ENCODE measurements at regions of chr9 and their contacts with region 1.

Region 1: DNA sequence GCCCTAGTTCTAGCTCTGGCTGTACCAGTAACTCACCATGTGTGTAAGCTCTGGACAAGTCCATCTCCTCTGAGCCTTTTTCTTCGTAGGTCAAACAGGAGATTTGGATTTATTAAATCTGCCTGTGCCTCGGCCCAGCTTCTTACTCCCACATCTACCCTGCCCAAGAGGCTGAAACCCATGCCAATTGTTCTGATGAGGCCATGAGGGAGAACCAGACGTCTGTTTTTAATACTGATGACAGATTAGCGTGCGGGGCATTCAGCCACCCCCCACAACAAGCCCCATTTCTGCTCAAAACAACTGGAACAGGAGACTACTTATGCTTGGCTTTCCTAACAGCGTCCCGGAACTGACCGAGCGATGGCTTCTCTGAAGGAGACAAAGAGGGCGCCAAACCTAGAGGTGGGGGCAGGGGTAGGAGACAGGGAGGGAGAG is 81.2 kb upstream of the TRIM32 start:
- DNase-seq: peak; percentile 30 to 34
- ATAC-seq: peak; percentile 70 to 93 (median 86)
- H3K4me3 ChIP-seq: no peak overlapping the region
- H3K27ac ChIP-seq: peak overlapping the region in 8 of 10 donors; percentile 10 to 72 (median 54)
- H3K4me1 ChIP-seq: peaks cover 0 to 7% (median 0%) of the 10 kb centered on the region in 9 donors
- H3K27me3 ChIP-seq: no peaks in the 10 kb centered on the region
- CTCF ChIP-seq: no peak

Region 2: GRCh38 chr9:115978659-115979096 is 627.2 kb before region 1 on chr9:
- intact Hi-C with region 1: no loop called
- DNase-seq: no peak
- ATAC-seq: no peak
- H3K4me3 ChIP-seq: no peak overlapping the region
- H3K27ac ChIP-seq: no peak overlapping the region
- H3K4me1 ChIP-seq: peaks cover 0 to 9% (median 0%) of the 10 kb centered on the region in 9 donors
- H3K27me3 ChIP-seq: no peaks in the 10 kb centered on the region
- CTCF ChIP-seq: no peak

Region 3: GRCh38 chr9:116549061-116549664 is 56.8 kb before region 1 on chr9:
- intact Hi-C with region 1: loop called in 1 of 10 experiments (anchors 10 kb)
- DNase-seq: peak; percentile 49 to 73
- ATAC-seq: peak; percentile 76 to 97 (median 93)
- H3K4me3 ChIP-seq: no peak overlapping the region
- H3K27ac ChIP-seq: peak overlapping the region in 6 of 10 donors; percentile 14 to 77 (median 46)
- H3K4me1 ChIP-seq: peaks cover 0 to 33% (median 23%) of the 10 kb centered on the region in 9 donors
- H3K27me3 ChIP-seq: no peaks in the 10 kb centered on the region
- CTCF ChIP-seq: no peak